ENCODE measurements at regions of chr17 and their contacts with region 1.

Region 1: DNA sequence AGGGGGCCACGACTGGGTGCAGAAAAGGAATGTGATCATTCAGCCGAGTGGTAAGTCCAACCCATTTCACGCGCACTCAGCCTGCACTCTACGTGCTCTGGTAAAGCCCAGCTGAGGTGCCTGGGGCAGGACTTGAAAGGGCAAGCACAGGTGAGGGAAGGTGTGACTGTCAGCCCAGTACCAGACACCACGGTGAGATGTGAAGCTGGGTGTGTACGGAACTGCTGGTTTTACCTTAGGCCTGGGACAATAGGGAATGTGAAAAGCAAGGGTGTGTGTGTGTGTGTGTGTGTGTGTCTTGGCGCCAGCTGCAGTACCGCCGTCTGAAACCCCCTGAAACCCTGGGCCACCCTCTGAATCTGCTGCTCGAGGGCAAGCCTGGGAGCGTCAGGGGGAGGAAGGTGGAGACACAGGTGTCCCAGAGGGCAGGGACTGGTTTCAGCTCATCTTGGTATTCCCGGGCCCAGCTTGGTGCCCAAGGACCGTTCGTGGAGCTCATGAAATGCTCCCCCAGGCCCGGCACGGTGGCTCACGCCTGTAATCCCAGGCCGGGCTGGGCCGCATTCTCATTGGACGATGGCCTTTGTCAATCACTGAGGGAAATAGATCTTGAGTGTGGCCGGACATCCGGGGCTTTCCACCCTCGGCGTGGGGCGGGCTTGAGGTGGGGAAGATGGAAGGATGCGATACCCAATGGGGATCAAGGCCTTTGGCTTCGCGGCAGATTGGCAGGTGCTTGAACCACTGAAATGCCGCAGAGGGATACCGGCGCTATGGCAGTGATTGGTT is 27.8 kb upstream of the ST6GALNAC1 start:
- DNase-seq: peak; percentile 100
- ATAC-seq: peak; percentile 97
- H3K4me3 ChIP-seq: peak overlapping the region; percentile 80 to 82
- H3K27ac ChIP-seq: peak overlapping the region; percentile 79
- H3K4me1 ChIP-seq: peaks cover 21% of the 10 kb centered on the region in 2 experiments
- H3K27me3 ChIP-seq: no peaks in the 10 kb centered on the region
- CTCF ChIP-seq: no peak
- POLR2A ChIP-seq: peak; percentile 64
- RAD21 ChIP-seq: no peak

Region 2: GRCh38 chr17:76659928-76660614 is 11.2 kb before region 1 on chr17:
- CTCF ChIA-PET with region 1: interaction called, 3 read pairs
- POLR2A ChIA-PET with region 1: interaction called, 15 read pairs
- RAD21 ChIA-PET with region 1: no interaction called
- intact Hi-C with region 1: no loop called
- DNase-seq: no peak
- ATAC-seq: peak; percentile 71
- H3K4me3 ChIP-seq: no peak overlapping the region
- H3K27ac ChIP-seq: peak overlapping the region; percentile 1; the same call in 1 of the 2 replicates
- H3K4me1 ChIP-seq: peaks cover 15 to 20% of the 10 kb centered on the region in 2 experiments
- H3K27me3 ChIP-seq: no peaks in the 10 kb centered on the region
- CTCF ChIP-seq: no peak
- POLR2A ChIP-seq: no peak
- RAD21 ChIP-seq: no peak